AG04449 (cell line): ENCODE measurements at regions of chr7 and their contacts with region 1.

Region 1: GRCh38 chr7:106736508-106737201 is 75.7 kb upstream of the CCDC71L start:
- DNase-seq: peak; percentile 14
- H3K4me3 ChIP-seq: no peak overlapping the region
- CTCF ChIP-seq: peak; percentile 67

Region 2: DNA sequence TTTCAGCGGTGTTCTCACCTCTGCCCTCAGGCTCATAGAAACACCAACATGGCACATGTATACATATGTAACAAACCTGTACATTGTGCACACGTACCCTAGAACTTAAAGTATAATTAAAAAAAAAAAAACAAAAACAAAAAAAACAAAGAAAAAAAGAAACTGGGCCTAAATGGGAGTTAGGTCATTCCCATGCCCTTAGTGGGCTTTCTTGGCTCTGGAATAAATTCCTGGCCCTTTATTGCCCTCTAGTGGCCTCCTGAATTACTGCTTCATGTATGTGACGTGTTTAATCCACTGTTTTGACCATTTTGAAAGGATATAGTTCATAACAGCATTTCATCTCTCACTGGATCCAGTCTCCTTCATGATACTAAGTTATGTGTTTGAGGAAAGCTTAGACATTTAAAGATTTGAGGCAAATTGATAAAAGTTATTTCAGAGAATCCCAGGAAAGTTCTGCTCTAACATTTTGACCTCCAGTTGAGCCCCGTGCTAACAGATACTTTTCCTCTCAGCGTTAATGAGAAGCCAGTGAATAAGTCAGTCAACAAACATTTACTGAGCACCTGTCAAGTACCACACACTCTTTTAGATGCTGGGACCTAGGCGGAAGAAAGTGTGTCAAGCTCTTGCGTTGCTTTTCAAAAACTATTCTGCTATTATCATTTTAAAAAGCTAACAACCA is 569.9 kb before region 1 on chr7:
- CTCF ChIA-PET with region 1: interaction called, 16 read pairs
- POLR2A ChIA-PET with region 1: no interaction called
- DNase-seq: no peak
- H3K4me3 ChIP-seq: no peak overlapping the region
- CTCF ChIP-seq: peak; percentile 68

Region 3: GRCh38 chr7:106542550-106543220 is 194.0 kb before region 1 on chr7:
- CTCF ChIA-PET with region 1: interaction called, 117 read pairs
- POLR2A ChIA-PET with region 1: interaction called, 10 read pairs
- DNase-seq: peak; percentile 70
- H3K4me3 ChIP-seq: no peak overlapping the region
- CTCF ChIP-seq: peak; percentile 55

Region 4: GRCh38 chr7:106717955-106718871 is 18.4 kb before region 1 on chr7:
- CTCF ChIA-PET with region 1: interaction called, 54 read pairs
- POLR2A ChIA-PET with region 1: interaction called, 3 read pairs
- DNase-seq: peak; percentile 98
- H3K4me3 ChIP-seq: no peak overlapping the region
- CTCF ChIP-seq: no peak

Region 5: DNA sequence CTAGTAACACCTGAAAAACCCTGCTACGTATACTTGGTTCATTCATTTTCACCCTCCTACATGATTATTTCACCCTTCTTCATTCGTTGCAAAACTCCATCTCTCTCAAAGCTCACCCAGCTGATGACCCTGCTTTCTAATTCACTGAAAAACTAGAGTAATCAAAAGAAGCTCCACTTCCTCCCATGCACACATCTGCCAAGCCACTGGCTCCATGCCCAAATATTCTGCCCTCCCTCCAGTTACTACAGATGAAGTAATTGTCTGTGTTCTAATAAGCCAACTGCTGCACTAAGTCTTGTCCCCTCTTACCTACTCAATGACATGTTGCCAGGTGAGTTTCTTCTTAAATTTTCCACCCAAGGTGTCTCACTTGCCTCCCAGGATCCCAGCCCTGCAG is 21.2 kb after region 1 on chr7:
- CTCF ChIA-PET with region 1: interaction called, 21 read pairs
- POLR2A ChIA-PET with region 1: no interaction called
- DNase-seq: no peak
- H3K4me3 ChIP-seq: no peak overlapping the region
- CTCF ChIP-seq: no peak